AG04449 (cell line): ENCODE measurements at regions of chr11 and their contacts with region 1.

Region 1: DNA sequence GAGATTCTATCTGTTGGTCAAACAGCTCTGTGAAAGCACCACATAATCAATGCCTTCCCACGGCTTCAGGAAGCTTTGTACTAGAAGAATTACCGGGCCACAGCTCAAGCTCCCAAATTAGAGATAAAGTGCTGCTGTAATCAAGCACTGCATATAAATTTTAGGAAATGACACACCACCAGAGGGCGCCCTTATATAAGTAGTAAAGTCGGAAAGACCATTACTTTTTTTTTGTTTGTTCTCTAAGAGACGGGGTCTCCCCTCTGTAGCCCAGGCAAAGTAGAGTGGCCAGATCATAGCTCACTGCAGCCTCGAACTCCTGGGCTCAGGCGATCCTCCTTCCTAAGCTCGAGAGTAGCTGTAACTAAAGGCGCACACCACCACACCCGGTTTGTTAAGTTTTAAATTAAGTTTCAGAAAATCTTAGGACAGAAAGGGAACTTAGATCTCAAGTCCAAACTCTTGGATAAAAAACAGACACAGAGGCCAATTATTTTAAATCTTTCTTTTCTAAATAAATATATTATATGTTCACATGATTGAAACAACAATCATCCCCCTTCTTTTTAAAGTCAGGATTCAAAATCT is 32.6 kb downstream of the PRCP start:
- DNase-seq: no peak
- H3K4me3 ChIP-seq: peak overlapping the region; percentile 24
- CTCF ChIP-seq: peak; percentile 52

Region 2: GRCh38 chr11:82012276-82012675 is 855.3 kb before region 1 on chr11:
- CTCF ChIA-PET with region 1: no interaction called
- POLR2A ChIA-PET with region 1: no interaction called
- DNase-seq: no peak
- H3K4me3 ChIP-seq: no peak overlapping the region
- CTCF ChIP-seq: no peak

Region 3: GRCh38 chr11:82718307-82718706 is 149.3 kb before region 1 on chr11:
- CTCF ChIA-PET with region 1: interaction called, 134 read pairs
- POLR2A ChIA-PET with region 1: no interaction called
- DNase-seq: peak; percentile 7
- H3K4me3 ChIP-seq: no peak overlapping the region
- CTCF ChIP-seq: peak; percentile 58

Region 4: GRCh38 chr11:82889133-82890001 is 21.8 kb after region 1 on chr11:
- CTCF ChIA-PET with region 1: interaction called, 131 read pairs
- POLR2A ChIA-PET with region 1: no interaction called
- DNase-seq: no peak
- H3K4me3 ChIP-seq: no peak overlapping the region
- CTCF ChIP-seq: no peak

Region 5: GRCh38 chr11:83175815-83176214 is 308.2 kb after region 1 on chr11:
- CTCF ChIA-PET with region 1: no interaction called
- POLR2A ChIA-PET with region 1: no interaction called
- DNase-seq: no peak
- H3K4me3 ChIP-seq: no peak overlapping the region
- CTCF ChIP-seq: no peak

Region 6: DNA sequence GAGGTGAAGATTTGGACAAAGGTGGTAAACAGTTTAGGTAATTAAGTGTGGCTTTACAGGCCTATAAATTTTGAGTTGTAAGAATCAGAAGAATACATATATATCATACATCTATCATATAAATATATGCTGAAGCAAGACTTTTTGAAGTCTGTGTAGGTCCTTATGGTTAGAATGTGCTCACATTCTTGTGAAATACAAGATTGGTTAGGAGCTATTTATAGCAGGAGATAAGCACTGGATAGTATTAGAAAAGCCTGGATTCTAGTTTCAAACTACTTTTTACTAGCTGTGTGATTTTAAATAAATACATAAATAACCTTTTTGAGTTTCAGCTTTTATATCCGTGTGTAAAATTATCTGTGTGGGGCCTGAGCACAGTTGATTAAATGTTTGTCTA is 368.2 kb after region 1 on chr11:
- CTCF ChIA-PET with region 1: interaction called, 13 read pairs
- POLR2A ChIA-PET with region 1: no interaction called
- DNase-seq: no peak
- H3K4me3 ChIP-seq: no peak overlapping the region
- CTCF ChIP-seq: no peak

Region 7: DNA sequence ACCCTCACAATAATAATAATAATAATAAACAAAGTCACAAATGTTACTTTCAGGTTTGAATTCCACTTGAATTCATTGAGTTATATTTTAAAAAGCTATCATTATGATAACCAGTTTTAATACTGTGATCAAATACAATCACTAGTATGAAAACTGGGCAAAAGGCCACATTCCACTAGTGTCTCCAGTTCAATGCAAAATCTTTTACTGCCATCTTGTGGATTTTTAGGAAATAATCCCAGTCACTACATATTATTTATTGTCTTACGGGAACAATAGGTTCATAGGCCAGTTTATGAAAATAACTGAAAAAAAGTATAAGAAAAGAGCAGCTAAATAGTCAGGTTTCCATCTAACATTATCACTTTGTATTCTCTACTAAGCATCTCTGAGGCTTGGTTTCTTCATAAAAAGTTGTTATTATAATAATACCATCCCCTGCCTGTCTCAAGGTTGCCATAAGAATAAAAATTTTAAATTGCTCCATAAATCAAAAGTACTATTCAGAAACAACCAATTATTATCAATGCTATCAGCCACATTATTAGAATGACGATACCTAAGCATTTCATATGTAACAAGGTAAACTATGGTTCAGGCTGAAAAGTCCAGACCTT is 952.5 kb after region 1 on chr11:
- CTCF ChIA-PET with region 1: interaction called, 103 read pairs
- POLR2A ChIA-PET with region 1: no interaction called
- DNase-seq: peak; percentile 26
- H3K4me3 ChIP-seq: no peak overlapping the region
- CTCF ChIP-seq: peak; percentile 35